Endothelial cell of umbilical vein (primary cell): ENCODE measurements at regions of chr2 and their contacts with region 1.

Region 1: DNA sequence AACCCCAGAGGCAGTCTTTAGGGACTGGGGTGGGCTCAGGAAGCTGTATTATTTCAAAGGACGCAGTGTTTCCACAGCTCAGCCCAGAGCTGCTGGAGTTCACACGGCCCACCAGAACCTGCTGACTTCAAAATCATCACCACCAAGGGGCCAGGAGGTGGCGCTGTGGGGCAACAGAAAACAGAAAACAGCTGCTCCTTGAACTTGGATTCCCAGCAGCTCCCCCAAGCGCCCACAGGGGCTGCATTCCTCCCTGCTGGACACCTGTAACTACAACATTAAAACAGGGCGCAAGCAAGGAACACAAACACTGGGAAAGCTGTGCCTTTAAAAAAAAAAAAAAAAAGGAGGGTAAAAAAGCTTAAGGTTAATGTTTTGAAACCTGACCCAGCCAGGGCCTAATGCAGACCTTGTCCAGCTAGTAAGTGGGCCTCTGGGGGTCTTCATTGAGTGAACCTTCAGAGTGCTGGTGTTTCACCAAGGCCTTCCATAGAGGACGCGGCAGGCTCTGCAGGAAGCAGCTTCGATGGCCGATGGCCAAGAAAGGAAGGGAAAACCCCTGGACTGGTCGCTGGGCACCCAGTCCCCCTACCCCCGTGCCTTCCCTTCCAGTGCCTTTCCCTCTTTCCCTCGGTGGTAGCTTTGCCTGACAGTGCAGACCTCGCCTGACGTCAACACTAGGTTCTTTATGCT is 25.9 kb downstream of the MLPH start:
- DNase-seq: peak; percentile 87
- H3K4me3 ChIP-seq: no peak overlapping the region
- H3K27ac ChIP-seq: no peak overlapping the region
- H3K4me1 ChIP-seq: peaks cover 9% of the 10 kb centered on the region
- H3K27me3 ChIP-seq: peaks cover 0 to 1% of the 10 kb centered on the region in 2 experiments
- CTCF ChIP-seq: peak; percentile 91 to 92
- POLR2A ChIP-seq: no peak

Region 2: DNA sequence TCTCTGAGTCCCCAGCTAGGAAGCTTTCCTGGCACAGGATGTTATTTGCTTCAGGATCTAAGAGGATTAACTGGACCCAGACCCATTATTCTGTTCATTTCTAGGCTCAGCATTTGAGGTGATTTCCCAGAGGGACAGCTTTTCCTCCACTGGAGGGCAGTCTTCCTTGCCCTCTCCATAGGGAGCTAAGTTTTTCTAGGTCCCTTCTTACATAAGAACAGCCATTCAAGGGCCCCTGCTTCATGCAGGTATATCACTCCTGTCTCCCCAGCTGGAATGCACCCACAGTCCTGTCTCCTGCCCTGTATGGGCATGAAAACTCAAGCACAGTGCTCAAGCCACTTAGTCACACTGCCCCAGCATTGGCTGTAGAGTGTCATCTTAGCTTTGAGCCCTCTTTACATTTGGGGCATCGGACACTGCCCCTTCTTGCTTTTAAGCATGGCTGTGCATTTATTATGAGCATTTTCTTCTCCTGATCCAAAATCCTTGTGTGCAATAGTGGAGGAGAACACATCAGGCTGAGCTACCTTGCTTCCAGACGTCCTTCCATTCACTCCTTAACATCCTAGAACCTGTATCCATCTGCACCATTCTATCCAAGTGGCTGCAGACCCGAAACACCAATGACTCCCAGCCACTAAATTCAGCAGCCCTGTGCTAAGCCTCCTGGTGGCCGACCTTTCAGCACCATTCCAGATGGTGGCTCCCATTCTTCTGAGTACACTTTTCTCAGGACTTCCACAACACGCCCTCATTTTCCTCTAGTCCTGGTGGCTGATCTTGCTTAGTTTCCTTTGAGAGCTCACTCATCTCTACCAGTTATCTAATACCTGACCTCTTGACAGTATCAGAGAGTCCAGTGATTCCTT is 347.3 kb before region 1 on chr2:
- CTCF ChIA-PET with region 1: interaction called, 14 read pairs
- POLR2A ChIA-PET with region 1: no interaction called
- dilution Hi-C with region 1: no loop called
- intact Hi-C with region 1: no loop called
- DNase-seq: peak; percentile 49
- H3K4me3 ChIP-seq: no peak overlapping the region
- H3K27ac ChIP-seq: no peak overlapping the region
- H3K4me1 ChIP-seq: no peaks in the 10 kb centered on the region
- H3K27me3 ChIP-seq: peaks cover 0 to 6% of the 10 kb centered on the region in 2 experiments
- CTCF ChIP-seq: peak; percentile 54 to 68
- POLR2A ChIP-seq: no peak

Region 3: DNA sequence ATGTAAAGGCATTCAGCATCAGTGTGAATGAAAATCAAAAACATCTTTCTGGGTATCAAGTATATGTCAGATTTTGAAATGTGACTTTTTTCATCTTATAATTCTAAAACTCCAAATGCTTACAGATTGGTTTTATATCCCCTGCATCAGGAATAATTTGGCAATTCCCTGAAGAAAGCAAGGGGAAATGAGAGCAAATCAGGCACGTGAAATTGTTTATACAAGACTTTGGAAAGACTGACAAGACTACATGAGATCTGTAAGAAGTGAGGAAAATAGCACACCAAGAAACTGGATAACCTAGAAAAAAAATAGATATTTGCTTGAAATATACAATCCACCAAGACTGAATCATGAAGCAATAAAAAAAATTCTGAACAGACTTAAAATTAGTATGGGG is 112.7 kb before region 1 on chr2:
- CTCF ChIA-PET with region 1: no interaction called
- POLR2A ChIA-PET with region 1: no interaction called
- dilution Hi-C with region 1: no loop called
- intact Hi-C with region 1: no loop called
- DNase-seq: no peak
- H3K4me3 ChIP-seq: no peak overlapping the region
- H3K27ac ChIP-seq: no peak overlapping the region
- H3K4me1 ChIP-seq: no peaks in the 10 kb centered on the region
- H3K27me3 ChIP-seq: peaks cover 9 to 10% of the 10 kb centered on the region in 2 experiments
- CTCF ChIP-seq: no peak
- POLR2A ChIP-seq: no peak

Region 4: GRCh38 chr2:237483040-237483721 is 29.7 kb before region 1 on chr2:
- CTCF ChIA-PET with region 1: interaction called, 18 read pairs
- POLR2A ChIA-PET with region 1: no interaction called
- dilution Hi-C with region 1: no loop called
- intact Hi-C with region 1: no loop called
- DNase-seq: peak; percentile 26
- H3K4me3 ChIP-seq: no peak overlapping the region
- H3K27ac ChIP-seq: no peak overlapping the region
- H3K4me1 ChIP-seq: no peaks in the 10 kb centered on the region
- H3K27me3 ChIP-seq: peaks cover 55 to 74% of the 10 kb centered on the region in 2 experiments
- CTCF ChIP-seq: peak in 1 of 2 donors; percentile 16
- POLR2A ChIP-seq: no peak

Region 5: DNA sequence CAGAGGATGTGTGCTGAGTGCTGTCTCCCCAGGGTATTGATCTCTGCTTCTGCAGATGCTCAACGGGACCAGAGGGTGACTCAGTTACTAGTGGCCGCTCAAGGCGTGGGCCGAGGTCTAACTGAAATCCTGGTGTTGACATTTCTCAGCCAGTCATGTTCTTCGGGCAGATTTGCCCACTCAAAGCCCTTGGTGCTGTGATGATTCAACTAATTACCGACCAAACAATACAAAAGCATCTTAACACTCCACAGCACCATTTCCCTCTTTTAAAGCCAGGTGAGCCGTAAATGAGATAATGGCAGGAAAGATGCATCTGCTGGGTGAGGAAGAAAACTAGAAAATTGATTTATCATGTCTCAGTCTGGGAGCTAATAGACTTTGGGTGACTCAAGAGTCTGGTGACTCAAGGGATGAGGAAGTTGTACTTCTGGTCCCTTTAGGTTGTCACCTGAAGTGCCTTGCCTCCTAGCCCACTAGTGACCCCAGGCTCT is 20.8 kb after region 1 on chr2:
- CTCF ChIA-PET with region 1: interaction called, 10 read pairs
- POLR2A ChIA-PET with region 1: no interaction called
- dilution Hi-C with region 1: no loop called
- intact Hi-C with region 1: no loop called
- DNase-seq: no peak
- H3K4me3 ChIP-seq: no peak overlapping the region
- H3K27ac ChIP-seq: no peak overlapping the region
- H3K4me1 ChIP-seq: peaks cover 2% of the 10 kb centered on the region
- H3K27me3 ChIP-seq: no peaks in the 10 kb centered on the region
- CTCF ChIP-seq: no peak
- POLR2A ChIP-seq: no peak

Region 6: DNA sequence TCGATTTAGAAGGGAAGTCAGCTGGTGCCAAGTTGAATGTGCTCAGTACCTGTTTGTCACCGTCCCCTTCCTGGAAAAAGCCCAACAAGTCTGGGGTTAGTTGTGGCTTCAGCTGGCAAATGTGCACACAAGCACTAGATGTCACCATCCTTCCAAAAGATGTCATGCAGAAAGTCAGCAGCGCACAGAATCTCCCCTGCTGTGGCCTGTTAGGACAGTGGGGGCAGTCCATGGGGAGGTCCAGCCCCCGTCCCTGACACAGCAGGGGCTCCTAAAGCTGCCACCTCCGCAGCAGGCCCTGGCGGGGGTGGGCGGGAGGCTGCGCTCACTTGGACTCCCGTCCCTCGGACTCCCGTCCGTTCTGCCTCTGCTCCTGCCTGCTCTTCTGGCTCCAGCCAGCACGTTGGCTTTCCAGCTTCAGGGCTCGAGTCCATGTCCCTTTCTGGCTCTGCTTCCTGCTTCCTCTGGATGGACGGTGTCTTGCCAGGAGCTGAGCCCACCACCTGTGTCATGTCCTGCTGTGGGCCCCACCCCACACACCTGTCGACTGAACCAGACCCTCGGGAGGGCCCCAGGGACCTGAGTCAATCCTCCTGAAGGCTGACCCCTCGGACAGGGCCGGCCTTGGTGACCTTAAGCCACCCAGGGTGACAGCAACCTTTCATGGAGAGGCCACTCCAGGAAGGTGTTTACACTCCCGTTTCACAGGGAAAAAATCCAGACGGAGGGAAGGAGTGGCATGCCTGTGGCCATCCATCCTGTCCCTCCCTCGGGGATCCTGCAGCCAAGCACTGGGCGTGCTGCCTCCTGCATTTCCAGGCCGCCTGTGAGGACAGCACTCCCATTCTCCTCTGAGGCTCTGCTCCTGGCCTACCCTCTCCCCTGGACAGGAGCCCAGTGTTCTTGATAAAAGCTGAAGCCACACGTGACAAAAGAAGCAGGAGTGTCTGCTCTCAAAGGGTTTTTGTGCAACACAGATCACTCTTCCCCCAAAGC is 69.1 kb after region 1 on chr2:
- CTCF ChIA-PET with region 1: interaction called, 295 read pairs
- POLR2A ChIA-PET with region 1: no interaction called
- dilution Hi-C with region 1: no loop called
- intact Hi-C with region 1: no loop called
- DNase-seq: peak; percentile 79
- H3K4me3 ChIP-seq: no peak overlapping the region
- H3K27ac ChIP-seq: no peak overlapping the region
- H3K4me1 ChIP-seq: no peaks in the 10 kb centered on the region
- H3K27me3 ChIP-seq: peaks cover 2% of the 10 kb centered on the region in 2 experiments
- CTCF ChIP-seq: peak; percentile 55 to 61
- POLR2A ChIP-seq: no peak

Region 7: DNA sequence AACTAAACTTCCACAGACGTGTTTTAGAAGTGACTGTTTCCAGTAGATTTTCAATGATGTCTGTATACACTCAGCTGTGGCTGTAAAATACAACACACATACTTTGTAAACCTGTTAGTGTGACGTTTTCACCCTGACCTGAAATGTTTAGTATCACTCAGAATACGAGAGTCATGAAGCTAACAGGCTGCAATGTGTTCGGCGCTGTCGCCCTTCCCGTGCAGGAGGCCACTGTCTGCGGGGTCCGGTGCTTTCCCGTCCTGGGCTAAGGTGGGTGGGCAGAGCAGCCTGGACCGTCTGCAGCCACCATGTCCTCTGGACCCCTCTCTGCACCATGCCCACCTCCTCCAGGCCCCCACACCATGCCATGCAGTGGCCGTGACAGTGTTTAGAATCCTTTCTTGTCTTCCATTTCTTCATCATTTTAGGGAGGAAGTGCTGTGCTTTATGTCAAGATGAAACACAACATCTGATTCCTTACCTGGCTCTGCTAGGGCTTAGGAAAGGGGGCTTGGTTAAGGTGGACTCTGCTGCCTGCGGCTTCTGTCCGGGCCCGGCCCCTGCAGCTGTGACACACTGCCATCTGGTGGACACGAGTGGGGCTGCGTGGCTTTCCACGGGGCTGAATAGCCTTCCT is 231.8 kb after region 1 on chr2:
- CTCF ChIA-PET with region 1: interaction called, 31 read pairs
- POLR2A ChIA-PET with region 1: no interaction called
- dilution Hi-C with region 1: no loop called
- intact Hi-C with region 1: loop called (anchors 1 kb)
- DNase-seq: peak; percentile 86
- H3K4me3 ChIP-seq: no peak overlapping the region
- H3K27ac ChIP-seq: peak overlapping the region; percentile 80
- H3K4me1 ChIP-seq: peaks cover 21% of the 10 kb centered on the region
- H3K27me3 ChIP-seq: no peaks in the 10 kb centered on the region
- CTCF ChIP-seq: peak; percentile 96 to 97
- POLR2A ChIP-seq: peak; percentile 31